GM12878 (cell line): ENCODE measurements at regions of chr9 and their contacts with region 1.

Region 1: GRCh38 chr9:37027582-37028419 is 6.3 kb downstream of the PAX5 start:
- DNase-seq: peak; percentile 85
- ATAC-seq: peak; percentile 78
- H3K4me3 ChIP-seq: peak overlapping the region; percentile 96
- H3K27ac ChIP-seq: peak overlapping the region; percentile 88
- H3K4me1 ChIP-seq: peaks cover 20% of the 10 kb centered on the region
- H3K27me3 ChIP-seq: no peaks in the 10 kb centered on the region
- CTCF ChIP-seq: no peak
- EP300 ChIP-seq: no peak
- POLR2A ChIP-seq: no peak
- RAD21 ChIP-seq: no peak

Region 2: DNA sequence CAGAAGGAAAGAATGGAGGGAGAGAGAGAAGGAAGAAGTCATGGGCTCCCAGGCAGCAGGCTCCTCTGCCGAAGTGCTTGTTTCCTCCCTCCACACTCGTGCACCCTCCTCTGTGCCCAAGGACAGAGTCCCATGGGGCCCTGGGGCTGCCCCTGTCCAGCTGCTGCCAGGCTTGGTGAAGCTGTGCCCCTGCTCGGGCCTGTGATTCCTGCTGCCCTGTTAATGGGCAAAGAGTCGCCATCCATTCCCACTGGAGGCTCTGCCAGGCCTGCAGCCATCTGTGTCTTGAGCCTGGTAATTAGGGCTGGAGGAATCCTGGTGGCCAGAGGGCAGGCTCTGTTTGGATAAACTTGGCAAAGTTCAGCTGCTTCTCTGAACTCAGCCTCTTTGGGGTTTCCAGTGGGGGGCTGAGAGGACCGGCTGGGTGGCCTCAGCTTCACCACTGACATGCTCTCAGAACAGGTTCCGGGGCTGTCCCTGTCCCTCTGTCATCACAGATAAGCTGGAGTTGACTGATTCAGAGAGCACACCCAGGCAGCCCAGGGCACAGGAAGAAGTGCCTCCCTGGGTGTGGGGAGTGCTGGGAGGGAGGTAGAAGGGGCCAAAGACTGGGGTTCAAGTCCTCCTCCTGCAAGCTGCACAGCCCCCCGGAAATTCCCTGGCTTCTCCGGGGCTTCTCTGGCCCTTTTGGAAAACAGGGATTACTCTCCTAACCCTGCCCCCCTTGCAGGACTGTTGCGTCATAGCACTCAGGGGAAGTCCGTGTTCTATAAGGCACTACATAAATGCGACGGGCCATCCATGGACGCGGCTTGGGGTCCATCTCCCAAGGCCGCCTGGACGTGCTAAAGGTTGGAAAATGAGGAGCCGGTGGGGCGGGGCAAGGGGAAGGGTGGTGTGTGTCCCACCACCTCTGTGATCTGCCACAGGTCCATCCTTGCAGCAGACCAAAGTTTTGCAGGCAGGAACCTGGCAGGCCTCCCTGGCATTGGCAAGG is 148.5 kb before region 1 on chr9:
- CTCF ChIA-PET with region 1: no interaction called
- POLR2A ChIA-PET with region 1: interaction called, 3 read pairs
- RAD21 ChIA-PET with region 1: interaction called, 16 read pairs
- SMC1A ChIA-PET with region 1: interaction called, 8 read pairs
- in situ Hi-C with region 1: loop called (anchors 5 kb)
- intact Hi-C with region 1: no loop called
- DNase-seq: no peak
- ATAC-seq: peak; percentile 91
- H3K4me3 ChIP-seq: no peak overlapping the region
- H3K27ac ChIP-seq: peak overlapping the region; percentile 55
- H3K4me1 ChIP-seq: peaks cover 45% of the 10 kb centered on the region
- H3K27me3 ChIP-seq: no peaks in the 10 kb centered on the region
- CTCF ChIP-seq: no peak
- EP300 ChIP-seq: no peak
- POLR2A ChIP-seq: no peak
- RAD21 ChIP-seq: no peak

Region 3: GRCh38 chr9:37010180-37010579 is 17.6 kb before region 1 on chr9:
- CTCF ChIA-PET with region 1: interaction called, 140 read pairs
- POLR2A ChIA-PET with region 1: interaction called, 354 read pairs
- RAD21 ChIA-PET with region 1: interaction called, 62 read pairs
- SMC1A ChIA-PET with region 1: interaction called, 227 read pairs
- in situ Hi-C with region 1: no loop called
- intact Hi-C with region 1: loop called (anchors 1 kb)
- DNase-seq: no peak
- ATAC-seq: peak; percentile 38
- H3K4me3 ChIP-seq: peak overlapping the region; percentile 61
- H3K27ac ChIP-seq: peak overlapping the region; percentile 83
- H3K4me1 ChIP-seq: peaks cover 76% of the 10 kb centered on the region
- H3K27me3 ChIP-seq: no peaks in the 10 kb centered on the region
- CTCF ChIP-seq: no peak
- EP300 ChIP-seq: no peak
- POLR2A ChIP-seq: 0 out of 2 replicates have a peak, but pooled peaks have one; percentile 38
- RAD21 ChIP-seq: no peak

Region 4: DNA sequence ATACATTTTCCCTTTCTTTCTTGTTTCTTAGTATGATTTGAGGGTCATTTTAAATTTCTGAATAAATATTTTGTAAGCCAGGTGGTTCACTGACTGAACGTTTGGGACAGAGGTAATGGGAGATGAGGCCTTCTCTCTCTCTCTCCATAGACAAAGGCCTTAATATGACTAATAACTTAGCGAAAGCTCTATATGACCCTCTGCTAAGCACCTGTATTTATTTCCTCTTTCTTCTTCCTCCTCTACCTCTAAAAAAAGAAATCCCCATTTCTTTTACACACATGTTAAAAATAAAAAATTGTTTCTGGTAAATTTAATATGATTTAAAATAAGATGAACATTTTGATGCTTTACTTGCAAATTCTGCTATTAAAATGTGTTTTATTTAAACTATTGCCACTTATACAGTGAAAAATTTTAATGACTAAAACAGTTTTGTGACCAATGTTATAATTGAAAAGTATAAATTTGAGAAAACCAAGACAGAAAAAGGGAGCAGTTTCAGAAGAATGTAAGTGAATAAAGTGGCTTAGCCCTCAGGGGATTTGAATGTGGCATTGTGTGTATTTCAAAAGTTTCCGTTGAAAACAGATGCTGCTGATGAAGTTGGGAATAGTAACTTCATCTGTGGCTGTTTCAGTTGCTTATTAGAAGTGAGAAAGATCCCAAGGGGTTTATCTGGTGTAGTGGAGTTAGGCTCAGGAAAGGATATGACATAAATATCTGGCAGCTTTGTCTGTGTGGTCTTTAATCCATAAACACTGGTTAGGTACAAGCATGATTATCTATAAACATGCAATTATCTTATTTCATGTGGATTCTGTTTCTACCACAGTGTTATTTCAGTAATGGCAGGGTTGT is 266.1 kb after region 1 on chr9:
- CTCF ChIA-PET with region 1: no interaction called
- POLR2A ChIA-PET with region 1: no interaction called
- RAD21 ChIA-PET with region 1: no interaction called
- SMC1A ChIA-PET with region 1: interaction called, 7 read pairs
- in situ Hi-C with region 1: no loop called
- intact Hi-C with region 1: loop called (anchors 5 kb)
- DNase-seq: peak; percentile 91
- ATAC-seq: peak; percentile 73
- H3K4me3 ChIP-seq: no peak overlapping the region
- H3K27ac ChIP-seq: peak overlapping the region; percentile 90
- H3K4me1 ChIP-seq: peaks cover 60% of the 10 kb centered on the region
- H3K27me3 ChIP-seq: no peaks in the 10 kb centered on the region
- CTCF ChIP-seq: no peak
- EP300 ChIP-seq: peak; percentile 95 to 96
- POLR2A ChIP-seq: no peak
- RAD21 ChIP-seq: no peak

Region 5: GRCh38 chr9:37575921-37576721 is 548.3 kb after region 1 on chr9 and contains the start of gene FBXO10:
- CTCF ChIA-PET with region 1: no interaction called
- POLR2A ChIA-PET with region 1: no interaction called
- RAD21 ChIA-PET with region 1: no interaction called
- SMC1A ChIA-PET with region 1: no interaction called
- in situ Hi-C with region 1: no loop called
- intact Hi-C with region 1: loop called (anchors 10 kb)
- DNase-seq: no peak
- ATAC-seq: peak; percentile 87
- H3K4me3 ChIP-seq: peak within 1 kb of the TSS; percentile 89
- H3K27ac ChIP-seq: peak within 1 kb of the TSS; percentile 78
- H3K4me1 ChIP-seq: peaks cover 5% of the 10 kb centered on the region
- H3K27me3 ChIP-seq: no peaks in the 10 kb centered on the region
- CTCF ChIP-seq: no peak
- EP300 ChIP-seq: 0 out of 4 replicates have a peak, but pooled peaks of 1 of the 2 experiments have one; percentile 6
- POLR2A ChIP-seq: peak; percentile 74
- RAD21 ChIP-seq: 0 out of 2 replicates have a peak, but pooled peaks have one; percentile 6
- polyA plus RNA-seq, gene FBXO10: 1.6 to 1.9 TPM